ENCODE measurements at regions of chr10 and their contacts with region 1.

Region 1: GRCh38 chr10:97731346-97732051 is 5.4 kb upstream of the ZFYVE27 start:
- DNase-seq: peak; percentile 33 to 73 (median 42)
- ATAC-seq: peak; percentile 85
- H3K4me3 ChIP-seq: no peak overlapping the region
- H3K27ac ChIP-seq: no peak overlapping the region
- H3K4me1 ChIP-seq: peaks cover under 1 to 5% of the 10 kb centered on the region in 2 experiments; a peak in 3 of 5 replicates
- H3K27me3 ChIP-seq: no peaks in the 10 kb centered on the region
- CTCF ChIP-seq: peak; percentile 67 to 88 (median 73)
- EP300 ChIP-seq: no peak
- POLR2A ChIP-seq: no peak
- RAD21 ChIP-seq: peak; percentile 83 to 95

Region 2: GRCh38 chr10:97572214-97572989 is 159.1 kb before region 1 on chr10 and contains the start of gene ANKRD2:
- CTCF ChIA-PET with region 1: interaction called, 8 read pairs
- POLR2A ChIA-PET with region 1: no interaction called
- in situ Hi-C with region 1: no loop called
- intact Hi-C with region 1: loop called (anchors 5 kb)
- DNase-seq: peak; percentile 63 to 79 (median 70)
- ATAC-seq: peak; percentile 97
- H3K4me3 ChIP-seq: no peak within 1 kb of the TSS
- H3K27ac ChIP-seq: no peak within 1 kb of the TSS
- H3K4me1 ChIP-seq: peaks cover 2 to 13% of the 10 kb centered on the region in 2 experiments; a peak in 4 of 5 replicates
- H3K27me3 ChIP-seq: no peaks in the 10 kb centered on the region
- CTCF ChIP-seq: peak; percentile 82 to 88 (median 84)
- EP300 ChIP-seq: no peak
- POLR2A ChIP-seq: no peak
- RAD21 ChIP-seq: peak; percentile 75 to 86
- polyA plus RNA-seq, gene ANKRD2: not detected

Region 3: DNA sequence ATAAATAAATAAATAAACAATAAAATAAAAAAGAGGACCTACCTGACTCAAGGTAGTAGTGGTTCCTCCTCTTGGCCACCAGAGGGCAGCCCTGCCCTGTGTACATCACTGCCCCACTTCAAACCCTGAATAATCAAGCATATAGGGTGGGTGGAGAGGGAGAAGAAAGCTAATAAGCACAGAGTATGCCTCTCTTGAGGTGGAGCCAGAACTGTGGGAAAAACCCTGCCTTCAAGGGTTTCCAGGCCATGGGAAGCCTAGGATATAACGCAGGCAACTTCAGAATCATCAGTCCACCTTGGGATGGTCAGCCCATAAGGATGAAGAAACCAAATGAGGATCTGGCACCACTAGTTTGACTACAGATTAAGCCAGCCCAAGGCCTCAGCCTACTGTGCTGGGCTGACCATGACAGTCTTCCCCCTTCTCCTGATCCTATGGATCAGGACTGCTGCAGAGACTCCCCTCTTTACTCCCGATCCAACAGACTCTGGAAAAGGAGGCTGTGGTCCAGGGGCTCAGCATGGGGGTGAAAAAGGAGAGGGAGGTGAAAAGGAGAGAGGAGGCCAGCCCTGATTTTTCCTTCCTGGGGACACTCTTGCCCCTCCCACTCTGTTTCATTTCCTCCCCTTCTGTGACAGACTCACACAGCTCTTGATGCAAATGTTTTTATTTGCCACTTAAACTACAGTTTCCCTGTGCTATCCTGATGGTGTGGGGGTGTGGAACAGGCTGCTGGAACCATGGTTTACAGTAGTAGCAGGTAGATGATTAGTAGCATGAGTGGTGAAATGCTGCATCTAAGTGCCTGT is 54.5 kb before region 1 on chr10:
- CTCF ChIA-PET with region 1: interaction called, 19 read pairs
- POLR2A ChIA-PET with region 1: interaction called, 5 read pairs
- in situ Hi-C with region 1: no loop called
- intact Hi-C with region 1: loop called (anchors 2 kb)
- DNase-seq: peak; percentile 55 to 69 (median 60)
- ATAC-seq: peak; percentile 89
- H3K4me3 ChIP-seq: no peak overlapping the region
- H3K27ac ChIP-seq: no peak overlapping the region
- H3K4me1 ChIP-seq: peaks cover 2 to 9% of the 10 kb centered on the region in 2 experiments; a peak in 3 of 5 replicates
- H3K27me3 ChIP-seq: no peaks in the 10 kb centered on the region
- CTCF ChIP-seq: peak; percentile 70 to 77 (median 70)
- EP300 ChIP-seq: no peak
- POLR2A ChIP-seq: peak; percentile 56
- RAD21 ChIP-seq: peak; percentile 65 to 70

Region 4: GRCh38 chr10:97701438-97702069 is 29.9 kb before region 1 on chr10:
- CTCF ChIA-PET with region 1: interaction called, 9 read pairs
- POLR2A ChIA-PET with region 1: interaction called, 4 read pairs
- in situ Hi-C with region 1: no loop called
- intact Hi-C with region 1: loop called (anchors 1 kb)
- DNase-seq: peak; percentile 55 to 73 (median 64)
- ATAC-seq: peak; percentile 98
- H3K4me3 ChIP-seq: no peak overlapping the region
- H3K27ac ChIP-seq: no peak overlapping the region
- H3K4me1 ChIP-seq: peaks cover 0 to 3% of the 10 kb centered on the region in 2 experiments; a peak in 4 of 5 replicates
- H3K27me3 ChIP-seq: no peaks in the 10 kb centered on the region
- CTCF ChIP-seq: peak; percentile 74 to 90 (median 87)
- EP300 ChIP-seq: no peak
- POLR2A ChIP-seq: no peak
- RAD21 ChIP-seq: peak; percentile 62 to 79

Region 5: GRCh38 chr10:97708976-97709946 is 22.2 kb before region 1 on chr10:
- CTCF ChIA-PET with region 1: interaction called, 33 read pairs
- POLR2A ChIA-PET with region 1: interaction called, 7 read pairs
- in situ Hi-C with region 1: no loop called
- intact Hi-C with region 1: loop called (anchors 1 kb)
- DNase-seq: peak in 2 of 4 experiments; percentile 19 to 62
- ATAC-seq: peak; percentile 47; the same call in 2 of the 3 replicates
- H3K4me3 ChIP-seq: no peak overlapping the region
- H3K27ac ChIP-seq: no peak overlapping the region
- H3K4me1 ChIP-seq: peaks cover 0 to 16% of the 10 kb centered on the region in 2 experiments; a peak in 3 of 5 replicates
- H3K27me3 ChIP-seq: no peaks in the 10 kb centered on the region
- CTCF ChIP-seq: peak; percentile 58 to 79 (median 68); a peak in 5 of 6 replicates
- EP300 ChIP-seq: no peak
- POLR2A ChIP-seq: no peak
- RAD21 ChIP-seq: peak; percentile 64 to 78